AG04449 (cell line): ENCODE measurements at regions of chr12 and their contacts with region 1.

Region 1: DNA sequence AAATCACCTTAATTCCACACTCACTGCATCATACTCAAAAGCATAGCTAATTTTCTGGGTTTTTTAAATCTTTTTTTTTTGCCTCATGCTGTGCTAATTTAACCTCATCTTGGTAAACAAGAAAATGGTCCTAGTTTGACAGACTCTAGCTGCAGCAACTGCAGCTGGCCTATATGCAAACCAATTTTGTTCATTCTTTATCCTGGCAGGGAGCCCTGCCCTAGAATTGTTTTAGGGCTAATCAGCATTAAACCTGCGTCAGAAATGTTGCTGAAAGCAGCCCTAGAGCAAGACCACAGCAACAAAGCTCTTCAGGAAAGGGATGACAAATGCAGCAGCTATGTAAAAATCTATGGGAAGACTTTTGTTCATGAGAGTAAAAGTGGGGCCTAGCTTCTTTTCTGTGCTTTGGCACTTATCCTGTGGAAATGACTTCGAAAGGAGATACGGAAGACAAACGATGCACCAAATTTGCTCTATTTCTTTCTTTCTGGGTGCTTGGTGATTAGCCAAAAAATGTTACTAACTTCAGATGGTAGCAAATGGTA is 72.2 kb downstream of the DENND5B start:
- DNase-seq: peak; percentile 100
- H3K4me3 ChIP-seq: no peak overlapping the region
- CTCF ChIP-seq: no peak

Region 2: GRCh38 chr12:31536672-31537071 is 17.9 kb after region 1 on chr12:
- CTCF ChIA-PET with region 1: no interaction called
- POLR2A ChIA-PET with region 1: no interaction called
- DNase-seq: no peak
- H3K4me3 ChIP-seq: no peak overlapping the region
- CTCF ChIP-seq: no peak

Region 3: DNA sequence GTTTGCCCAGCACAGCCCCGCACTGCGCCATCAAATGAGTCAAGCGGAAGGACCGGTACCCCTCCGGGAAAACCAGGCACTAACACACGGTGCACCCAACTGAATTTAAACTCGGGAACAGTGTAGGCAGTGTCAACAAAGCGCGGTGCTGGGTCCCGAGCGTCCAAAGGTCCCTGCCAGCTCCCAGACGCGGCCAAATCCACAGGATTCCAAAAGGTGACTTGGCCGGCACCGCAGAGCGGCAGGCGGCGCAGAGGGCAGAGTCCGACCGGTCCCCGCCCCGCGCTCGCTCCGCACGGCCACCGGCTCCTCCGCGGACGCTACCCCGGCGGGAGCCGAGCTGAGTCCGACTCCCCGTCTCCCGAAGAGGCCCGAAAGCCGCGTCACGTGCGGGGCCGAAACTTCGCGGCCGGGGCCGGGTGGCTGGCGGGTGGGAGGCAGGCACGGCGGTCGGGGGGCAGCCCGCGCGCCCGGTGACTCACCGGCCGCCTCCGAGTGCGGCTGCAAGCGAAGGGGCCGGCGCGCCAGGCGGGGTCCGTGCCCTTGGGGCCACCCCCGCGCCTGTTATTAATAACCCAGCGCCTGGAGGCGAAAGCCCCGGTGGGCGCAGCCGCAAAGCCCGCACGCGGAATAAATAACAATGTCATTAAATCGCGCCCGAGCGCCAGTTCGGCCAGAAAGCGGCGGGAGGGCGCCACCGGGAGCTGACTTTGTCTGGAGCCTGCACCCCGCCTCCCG is 71.3 kb after region 1 on chr12:
- CTCF ChIA-PET with region 1: no interaction called
- POLR2A ChIA-PET with region 1: interaction called, 13 read pairs
- DNase-seq: no peak
- H3K4me3 ChIP-seq: peak overlapping the region; percentile 86
- CTCF ChIP-seq: no peak